ENCODE measurements at regions of chr3 and their contacts with region 1.

Region 1: GRCh38 chr3:130746246-130747039 is at the start of gene PIK3R4:
- DNase-seq: peak; percentile 79 to 98 (median 92)
- ATAC-seq: peak; percentile 87
- H3K4me3 ChIP-seq: peak within 1 kb of the TSS; percentile 87
- H3K4me3 Mint-ChIP-seq: peak within 1 kb of the TSS in 9 of 10 donors; percentile 82 to 97 (median 93)
- H3K27ac ChIP-seq: peak within 1 kb of the TSS; percentile 89
- H3K27ac Mint-ChIP-seq: peak within 1 kb of the TSS; percentile 89 to 99 (median 94)
- H3K4me1 ChIP-seq: peaks cover 5 to 20% of the 10 kb centered on the region in 2 donors
- H3K4me1 Mint-ChIP-seq: peaks cover 35 to 62% (median 50%) of the 10 kb centered on the region in 7 donors
- H3K27me3 ChIP-seq: no peaks in the 10 kb centered on the region
- H3K27me3 Mint-ChIP-seq: peaks cover 0 to 3% (median 0%) of the 10 kb centered on the region in 5 donors
- total RNA-seq, gene PIK3R4: 15.5 to 33.6 (median 27.3) TPM

Region 2: DNA sequence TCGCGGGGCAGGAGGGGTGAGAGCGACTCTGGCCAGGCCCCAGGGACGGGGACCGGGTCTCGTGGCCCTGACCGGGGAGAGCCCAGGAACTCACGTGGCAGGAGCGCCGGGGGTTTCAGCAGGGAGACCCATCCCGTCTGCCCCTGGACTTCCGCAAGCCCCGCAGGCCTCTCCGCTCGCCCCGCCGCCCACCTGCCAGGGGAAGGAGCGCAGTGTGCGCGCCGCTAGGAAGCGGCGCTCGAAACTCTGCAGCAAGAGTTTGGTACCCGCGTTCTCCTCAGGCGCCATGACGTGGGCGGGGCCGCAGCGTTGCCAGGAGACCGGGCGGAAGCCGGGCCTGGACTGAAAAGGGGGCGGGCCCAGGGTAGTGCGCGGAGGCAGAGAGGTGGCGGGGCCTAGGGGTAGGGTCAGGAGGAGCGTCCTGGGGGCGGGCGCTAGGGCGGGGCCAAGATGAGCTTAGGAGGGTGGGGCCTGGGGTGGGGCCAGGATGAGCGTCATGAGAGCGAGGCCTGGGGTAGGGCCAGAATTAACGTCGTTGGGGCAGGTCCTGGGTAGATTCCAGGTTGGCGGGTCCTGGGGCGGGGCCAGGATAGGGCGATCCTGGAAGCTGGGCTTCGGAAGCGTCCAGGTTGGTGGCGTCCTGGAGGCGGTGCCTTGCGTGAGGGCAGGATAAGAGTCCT is 635.1 kb before region 1 on chr3:
- CTCF ChIA-PET with region 1: no interaction called
- POLR2A ChIA-PET with region 1: no interaction called
- intact Hi-C with region 1: loop called (anchors 2 to 5 kb)
- DNase-seq: peak; percentile 96 to 99 (median 98)
- ATAC-seq: peak; percentile 100
- H3K4me3 ChIP-seq: peak overlapping the region; percentile 58
- H3K4me3 Mint-ChIP-seq: peak overlapping the region; percentile 85 to 100 (median 98)
- H3K27ac ChIP-seq: peak overlapping the region; percentile 90
- H3K27ac Mint-ChIP-seq: peak overlapping the region; percentile 91 to 100 (median 100)
- H3K4me1 ChIP-seq: no peaks in the 10 kb centered on the region
- H3K4me1 Mint-ChIP-seq: peaks cover 11 to 22% (median 13%) of the 10 kb centered on the region in 7 donors
- H3K27me3 ChIP-seq: no peaks in the 10 kb centered on the region
- H3K27me3 Mint-ChIP-seq: peaks cover 0 to 14% (median 0%) of the 10 kb centered on the region in 5 donors

Region 3: DNA sequence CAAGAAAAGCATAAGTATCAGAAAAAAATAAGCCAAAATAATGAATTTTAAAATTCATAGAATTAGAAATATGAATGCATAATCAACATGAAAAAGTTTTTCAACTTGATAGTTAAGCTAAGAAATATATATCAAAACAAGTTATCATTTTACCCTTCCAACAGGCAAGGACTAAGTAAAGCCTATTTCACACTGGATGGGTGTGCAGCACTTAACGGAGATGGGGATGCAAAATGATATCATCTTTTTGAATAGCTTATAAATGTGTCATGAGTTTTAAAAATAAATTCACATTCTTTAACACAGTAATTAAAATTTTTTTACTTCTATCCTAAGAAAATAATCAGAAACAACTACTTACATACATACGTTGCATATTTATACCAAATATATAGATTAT is 20.7 kb before region 1 on chr3:
- CTCF ChIA-PET with region 1: interaction called, 3 read pairs
- POLR2A ChIA-PET with region 1: interaction called, 3 read pairs
- intact Hi-C with region 1: loop called in 1 of 2 experiments (anchors 1 kb)
- DNase-seq: no peak
- ATAC-seq: no peak
- H3K4me3 ChIP-seq: no peak overlapping the region
- H3K4me3 Mint-ChIP-seq: no peak overlapping the region
- H3K27ac ChIP-seq: no peak overlapping the region
- H3K27ac Mint-ChIP-seq: no peak overlapping the region
- H3K4me1 ChIP-seq: no peaks in the 10 kb centered on the region
- H3K4me1 Mint-ChIP-seq: peaks cover 0 to 13% (median 7%) of the 10 kb centered on the region in 7 donors
- H3K27me3 ChIP-seq: no peaks in the 10 kb centered on the region
- H3K27me3 Mint-ChIP-seq: no peaks in the 10 kb centered on the region

Region 4: GRCh38 chr3:130759699-130760338 is 13.4 kb after region 1 on chr3:
- CTCF ChIA-PET with region 1: interaction called, 4 read pairs
- POLR2A ChIA-PET with region 1: no interaction called
- intact Hi-C with region 1: loop called (anchors 1 kb)
- DNase-seq: peak in 8 of 9 donors; percentile 27 to 65 (median 50)
- ATAC-seq: peak; percentile 89
- H3K4me3 ChIP-seq: no peak overlapping the region
- H3K4me3 Mint-ChIP-seq: no peak overlapping the region
- H3K27ac ChIP-seq: no peak overlapping the region
- H3K27ac Mint-ChIP-seq: peak overlapping the region in 1 of 9 donors; percentile 68
- H3K4me1 ChIP-seq: no peaks in the 10 kb centered on the region
- H3K4me1 Mint-ChIP-seq: peaks cover 0 to 10% (median 0%) of the 10 kb centered on the region in 7 donors
- H3K27me3 ChIP-seq: no peaks in the 10 kb centered on the region
- H3K27me3 Mint-ChIP-seq: peaks cover 0 to 20% (median 6%) of the 10 kb centered on the region in 5 donors

Region 5: GRCh38 chr3:130779031-130779430 is 32.6 kb after region 1 on chr3:
- CTCF ChIA-PET with region 1: no interaction called
- POLR2A ChIA-PET with region 1: no interaction called
- intact Hi-C with region 1: no loop called
- DNase-seq: no peak
- ATAC-seq: no peak
- H3K4me3 ChIP-seq: no peak overlapping the region
- H3K4me3 Mint-ChIP-seq: no peak overlapping the region
- H3K27ac ChIP-seq: no peak overlapping the region
- H3K27ac Mint-ChIP-seq: no peak overlapping the region
- H3K4me1 ChIP-seq: no peaks in the 10 kb centered on the region
- H3K4me1 Mint-ChIP-seq: no peaks in the 10 kb centered on the region
- H3K27me3 ChIP-seq: peaks cover 0 to 4% of the 10 kb centered on the region in 2 donors
- H3K27me3 Mint-ChIP-seq: peaks cover 0 to 29% (median 15%) of the 10 kb centered on the region in 5 donors

Region 6: GRCh38 chr3:130831719-130832400 is 85.4 kb after region 1 on chr3:
- CTCF ChIA-PET with region 1: no interaction called
- POLR2A ChIA-PET with region 1: no interaction called
- intact Hi-C with region 1: no loop called
- DNase-seq: no peak
- ATAC-seq: no peak
- H3K4me3 ChIP-seq: no peak overlapping the region
- H3K4me3 Mint-ChIP-seq: no peak overlapping the region
- H3K27ac ChIP-seq: no peak overlapping the region
- H3K27ac Mint-ChIP-seq: no peak overlapping the region
- H3K4me1 ChIP-seq: no peaks in the 10 kb centered on the region
- H3K4me1 Mint-ChIP-seq: no peaks in the 10 kb centered on the region
- H3K27me3 ChIP-seq: no peaks in the 10 kb centered on the region
- H3K27me3 Mint-ChIP-seq: peaks cover 0 to 22% (median 5%) of the 10 kb centered on the region in 5 donors

Region 7: GRCh38 chr3:130850044-130850797 is 103.8 kb after region 1 on chr3:
- CTCF ChIA-PET with region 1: no interaction called
- POLR2A ChIA-PET with region 1: no interaction called
- intact Hi-C with region 1: loop called in 1 of 2 experiments (anchors 1 kb)
- DNase-seq: peak in 6 of 9 donors; percentile 1 to 55 (median 18)
- ATAC-seq: peak; percentile 85
- H3K4me3 ChIP-seq: no peak overlapping the region
- H3K4me3 Mint-ChIP-seq: peak overlapping the region in 6 of 10 donors; percentile 5 to 54 (median 33)
- H3K27ac ChIP-seq: no peak overlapping the region
- H3K27ac Mint-ChIP-seq: peak overlapping the region in 1 of 9 donors; percentile 76
- H3K4me1 ChIP-seq: peaks cover 0 to 8% of the 10 kb centered on the region in 2 donors
- H3K4me1 Mint-ChIP-seq: peaks cover 0 to 35% (median 13%) of the 10 kb centered on the region in 7 donors
- H3K27me3 ChIP-seq: no peaks in the 10 kb centered on the region
- H3K27me3 Mint-ChIP-seq: peaks cover 10 to 31% (median 17%) of the 10 kb centered on the region in 5 donors

Region 8: DNA sequence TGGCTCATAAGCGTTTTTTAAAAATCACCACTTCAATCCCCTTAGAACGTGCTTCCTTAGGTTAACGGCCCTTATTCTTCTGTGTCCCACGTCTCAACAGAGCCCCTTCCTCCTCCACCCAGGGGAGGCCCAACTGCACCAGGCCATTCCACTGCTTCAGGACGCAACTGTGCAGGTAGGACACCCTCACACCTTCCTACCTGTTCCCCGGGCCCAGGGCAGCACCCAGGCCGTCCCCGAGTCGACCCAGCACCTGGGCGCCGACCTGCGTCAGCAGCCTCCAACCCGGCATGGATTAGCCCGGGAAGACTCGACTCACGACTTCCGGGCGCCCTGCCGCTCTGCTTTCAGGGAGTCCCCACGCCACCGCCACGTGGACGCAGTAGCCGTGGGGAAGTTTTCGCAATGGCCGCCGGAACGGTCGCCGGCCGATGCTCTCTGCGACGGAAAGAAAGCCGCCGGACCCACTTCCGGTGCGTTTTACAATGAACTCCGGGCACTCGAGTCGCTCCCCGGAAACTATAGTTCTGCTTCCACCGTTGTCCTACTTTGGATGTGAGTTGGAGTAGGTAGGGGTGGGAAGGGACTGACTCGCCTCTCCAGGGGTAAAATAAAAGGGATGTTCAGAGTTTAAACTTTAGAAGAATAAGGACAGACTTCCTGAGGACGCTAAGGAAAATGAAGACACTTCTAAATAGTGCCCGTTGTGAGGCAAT is 756.2 kb after region 1 on chr3 and contains the start of gene MRPL3:
- CTCF ChIA-PET with region 1: no interaction called
- POLR2A ChIA-PET with region 1: interaction called, 3 read pairs
- intact Hi-C with region 1: loop called (anchors 2 kb)
- DNase-seq: peak; percentile 68 to 82 (median 78)
- ATAC-seq: peak; percentile 90
- H3K4me3 ChIP-seq: peak within 1 kb of the TSS; percentile 79
- H3K4me3 Mint-ChIP-seq: peak within 1 kb of the TSS; percentile 94 to 100 (median 98)
- H3K27ac ChIP-seq: peak within 1 kb of the TSS; percentile 72
- H3K27ac Mint-ChIP-seq: peak within 1 kb of the TSS; percentile 86 to 98 (median 96)
- H3K4me1 ChIP-seq: peaks cover 23% of the 10 kb centered on the region in 2 donors
- H3K4me1 Mint-ChIP-seq: peaks cover 15 to 65% (median 53%) of the 10 kb centered on the region in 7 donors
- H3K27me3 ChIP-seq: no peaks in the 10 kb centered on the region
- H3K27me3 Mint-ChIP-seq: no peaks in the 10 kb centered on the region
- total RNA-seq, gene MRPL3: 33.8 to 79.2 (median 52.7) TPM

Measured in naive thymus-derived CD4-positive, alpha-beta T cell (primary cell).